CD14-positive monocyte (primary cell): ENCODE measurements at regions of chr1 and their contacts with region 1.

Region 1: DNA sequence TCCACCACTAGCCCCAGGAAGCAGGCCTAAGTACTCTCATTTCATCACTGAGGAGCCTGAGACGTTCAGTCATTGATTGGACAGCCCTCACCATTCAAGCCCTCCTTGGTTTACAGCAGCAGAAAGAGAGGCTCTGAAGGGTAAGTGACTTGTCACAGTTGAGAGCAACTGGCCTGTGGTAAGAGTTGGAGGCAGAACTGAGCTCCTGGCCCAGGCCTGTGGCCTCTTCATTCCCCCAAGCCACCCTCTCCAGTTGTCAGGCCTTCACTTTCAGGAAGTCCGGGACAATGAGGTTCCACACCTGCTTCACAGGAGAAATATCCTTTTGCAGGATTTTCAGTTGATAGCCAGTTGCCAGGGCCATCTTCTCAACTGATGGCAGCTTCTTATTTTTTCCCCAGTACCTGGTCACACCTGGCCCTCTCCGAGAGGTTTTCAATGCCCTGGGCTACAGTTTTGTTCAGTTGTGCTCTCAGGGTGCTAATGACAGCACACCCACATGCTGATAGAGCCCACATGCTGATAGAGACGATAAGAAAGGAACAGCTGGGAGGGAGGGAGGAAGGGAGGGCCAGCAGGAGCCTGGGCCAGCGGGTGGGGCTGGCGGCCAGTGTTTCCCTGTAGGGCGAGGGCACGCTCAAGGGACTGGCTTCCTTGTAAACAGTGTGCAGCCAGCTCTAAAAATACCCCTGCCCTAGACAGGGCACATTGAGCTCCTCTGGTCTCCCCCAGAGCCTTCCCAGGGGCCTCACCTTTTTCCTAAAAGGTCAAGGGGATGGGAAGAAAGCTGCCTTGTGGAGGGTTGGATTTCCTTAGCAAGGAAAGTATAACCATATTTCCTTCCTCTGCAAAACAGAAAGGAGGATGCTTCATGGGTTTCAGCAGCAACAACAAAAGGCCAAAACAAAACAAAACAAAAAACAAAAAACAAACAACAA is 112.7 kb upstream of the JUN start:
- DNase-seq: peak in 1 of 3 donors; percentile 20
- H3K4me3 ChIP-seq: peak overlapping the region in 1 of 3 experiments; percentile 44
- H3K4me3 Mint-ChIP-seq: peak overlapping the region; percentile 48 to 63
- H3K27ac ChIP-seq: peak overlapping the region; percentile 25 to 82
- H3K27ac Mint-ChIP-seq: peak overlapping the region; percentile 74 to 94 (median 90)
- H3K4me1 ChIP-seq: peaks cover 70 to 80% of the 10 kb centered on the region in 2 donors
- H3K4me1 Mint-ChIP-seq: peaks cover 78% of the 10 kb centered on the region
- H3K27me3 ChIP-seq: no peaks in the 10 kb centered on the region
- H3K27me3 Mint-ChIP-seq: peaks cover 0 to 5% (median 2%) of the 10 kb centered on the region in 3 donors
- CTCF ChIP-seq: no peak

Region 2: GRCh38 chr1:58874757-58875755 is 21.5 kb before region 1 on chr1:
- intact Hi-C with region 1: no loop called
- DNase-seq: no peak
- H3K4me3 ChIP-seq: no peak overlapping the region
- H3K4me3 Mint-ChIP-seq: no peak overlapping the region
- H3K27ac ChIP-seq: no peak overlapping the region
- H3K27ac Mint-ChIP-seq: no peak overlapping the region
- H3K4me1 ChIP-seq: no peaks in the 10 kb centered on the region
- H3K4me1 Mint-ChIP-seq: peaks cover 15% of the 10 kb centered on the region
- H3K27me3 ChIP-seq: no peaks in the 10 kb centered on the region
- H3K27me3 Mint-ChIP-seq: peaks cover 0 to 4% (median 2%) of the 10 kb centered on the region in 3 donors
- CTCF ChIP-seq: no peak

Region 3: GRCh38 chr1:58932859-58933598 is 36.5 kb after region 1 on chr1:
- intact Hi-C with region 1: loop called in 1 of 2 experiments (anchors 5 kb)
- DNase-seq: peak; percentile 55 to 74 (median 64)
- H3K4me3 ChIP-seq: peak overlapping the region in 1 of 3 experiments; percentile 12
- H3K4me3 Mint-ChIP-seq: peak overlapping the region in 1 of 2 donors; percentile 43
- H3K27ac ChIP-seq: peak overlapping the region in 1 of 2 donors; percentile 55
- H3K27ac Mint-ChIP-seq: peak overlapping the region in 6 of 7 donors; percentile 45 to 84 (median 74)
- H3K4me1 ChIP-seq: peaks cover 29 to 42% of the 10 kb centered on the region in 2 donors
- H3K4me1 Mint-ChIP-seq: peaks cover 44% of the 10 kb centered on the region
- H3K27me3 ChIP-seq: no peaks in the 10 kb centered on the region
- H3K27me3 Mint-ChIP-seq: peaks cover 2 to 4% (median 3%) of the 10 kb centered on the region in 3 donors
- CTCF ChIP-seq: no peak